AG04450 (cell line): ENCODE measurements at regions of chr11 and their contacts with region 1.

Region 1: GRCh38 chr11:118171269-118172062 is 5.0 kb downstream of the SCN2B start:
- DNase-seq: peak; percentile 8
- H3K4me3 ChIP-seq: no peak overlapping the region
- H3K27ac ChIP-seq: no peak overlapping the region
- H3K27me3 ChIP-seq: peaks cover 31% of the 10 kb centered on the region
- CTCF ChIP-seq: peak; percentile 83

Region 2: DNA sequence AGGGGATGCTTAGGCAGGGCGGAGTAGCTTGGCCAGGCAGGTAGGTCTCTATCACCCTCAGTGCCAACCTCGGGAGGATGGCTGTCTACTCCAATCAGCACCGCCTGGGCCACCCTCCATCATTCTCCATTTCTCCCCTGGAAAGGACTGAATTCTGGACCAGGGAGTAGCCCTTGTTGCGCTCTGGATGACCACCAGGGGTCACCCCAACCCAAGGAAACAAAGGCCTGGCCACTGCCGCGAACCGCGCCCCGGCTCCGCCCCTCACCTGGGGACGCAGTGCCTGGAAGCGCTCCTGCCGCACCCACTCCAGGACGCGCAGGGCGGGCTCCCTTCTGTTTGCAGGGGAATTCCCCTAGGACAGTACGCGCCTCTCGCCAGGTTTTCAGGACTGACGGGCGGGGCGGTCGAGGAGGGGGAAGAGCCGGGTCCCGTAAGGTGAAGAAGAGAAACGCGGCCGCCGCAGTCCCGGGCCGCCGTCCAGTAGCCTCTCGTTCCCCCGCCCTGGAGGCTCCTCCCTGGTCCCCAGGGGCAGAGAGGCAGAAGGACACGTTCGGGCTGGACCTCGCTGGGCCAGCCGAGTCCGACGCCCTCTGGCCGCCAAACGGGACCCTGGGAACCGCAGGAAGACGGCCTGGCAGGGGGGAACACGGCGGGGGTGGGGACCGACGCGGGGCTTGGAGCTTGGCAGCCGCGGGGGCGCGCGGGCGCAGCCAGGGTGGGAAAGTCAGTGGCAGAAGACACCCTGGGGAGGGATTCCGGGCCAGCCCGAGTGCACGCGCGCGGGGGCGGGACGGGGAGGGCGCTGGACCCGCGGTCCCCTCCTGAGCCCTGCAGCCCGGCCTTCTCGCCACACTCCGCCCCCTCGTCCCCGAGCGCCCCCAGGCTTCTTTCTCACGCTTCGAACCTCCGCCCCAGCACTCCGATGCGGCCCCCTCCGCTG is 25.9 kb before region 1 on chr11:
- CTCF ChIA-PET with region 1: interaction called, 71 read pairs
- POLR2A ChIA-PET with region 1: no interaction called
- DNase-seq: no peak
- H3K4me3 ChIP-seq: peak overlapping the region; percentile 50
- H3K27ac ChIP-seq: no peak overlapping the region
- H3K27me3 ChIP-seq: peaks cover 50% of the 10 kb centered on the region
- CTCF ChIP-seq: peak; percentile 87

Region 3: GRCh38 chr11:118152552-118153471 is 18.7 kb before region 1 on chr11 and contains the start of gene SCN4B:
- CTCF ChIA-PET with region 1: interaction called, 71 read pairs
- POLR2A ChIA-PET with region 1: no interaction called
- DNase-seq: peak; percentile 6
- H3K4me3 ChIP-seq: peak within 1 kb of the TSS; percentile 46
- H3K27ac ChIP-seq: no peak within 1 kb of the TSS
- H3K27me3 ChIP-seq: peaks cover 80% of the 10 kb centered on the region
- CTCF ChIP-seq: no peak
- polyA plus RNA-seq, gene SCN4B: 0.10 and 0.11 TPM in 2 replicates